Panc1 (cell line): ENCODE measurements at regions of chr1 and their contacts with region 1.

Region 1: DNA sequence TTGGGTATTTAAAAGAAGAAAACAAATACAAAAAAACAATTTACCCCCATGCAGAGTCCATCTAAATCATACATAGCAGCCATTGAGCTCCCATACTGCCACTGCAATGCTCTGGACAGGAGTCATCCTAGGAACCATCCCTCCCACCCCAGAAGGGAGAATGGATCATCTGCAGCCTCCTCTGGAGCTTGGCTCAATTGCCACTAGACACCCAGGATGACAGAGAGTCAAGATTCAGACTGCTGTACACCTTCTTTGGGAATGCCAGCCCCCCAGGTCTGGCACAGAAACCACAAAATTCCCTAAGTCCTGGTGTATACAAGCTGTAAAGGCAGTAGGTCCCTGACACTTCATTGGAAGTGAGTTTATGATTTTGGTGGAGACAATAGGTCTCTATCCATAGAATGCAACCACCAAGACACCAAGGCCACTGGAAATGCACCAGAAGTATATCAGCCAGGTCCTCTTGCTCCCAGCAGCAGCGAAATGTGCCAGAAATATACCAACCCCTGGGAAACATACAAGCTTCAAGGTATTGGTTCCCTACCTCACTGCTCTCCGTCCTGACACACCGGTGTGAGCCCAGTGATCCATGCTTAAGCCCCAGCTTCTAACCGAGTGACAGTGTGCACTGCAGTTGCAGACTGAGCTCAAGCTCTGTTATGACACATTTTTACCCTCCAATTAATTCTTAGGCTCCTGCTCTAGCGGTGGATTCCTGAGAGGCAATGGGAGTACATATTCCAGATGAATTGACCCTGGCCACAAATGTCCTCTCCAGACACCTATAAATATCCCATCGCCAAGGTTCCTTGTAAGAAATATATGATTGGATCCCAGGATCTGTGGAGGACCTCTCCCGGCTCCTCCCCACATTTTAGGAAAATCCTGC is 4.4 kb downstream of the TAL1 start:
- DNase-seq: no peak
- ATAC-seq: no peak
- H3K4me3 ChIP-seq: no peak overlapping the region
- H3K27ac ChIP-seq: no peak overlapping the region
- H3K4me1 ChIP-seq: 0 out of 2 replicates have a peak, but pooled peaks cover 2% of the 10 kb centered on the region
- H3K27me3 ChIP-seq: peaks cover 25% of the 10 kb centered on the region
- CTCF ChIP-seq: no peak

Region 2: DNA sequence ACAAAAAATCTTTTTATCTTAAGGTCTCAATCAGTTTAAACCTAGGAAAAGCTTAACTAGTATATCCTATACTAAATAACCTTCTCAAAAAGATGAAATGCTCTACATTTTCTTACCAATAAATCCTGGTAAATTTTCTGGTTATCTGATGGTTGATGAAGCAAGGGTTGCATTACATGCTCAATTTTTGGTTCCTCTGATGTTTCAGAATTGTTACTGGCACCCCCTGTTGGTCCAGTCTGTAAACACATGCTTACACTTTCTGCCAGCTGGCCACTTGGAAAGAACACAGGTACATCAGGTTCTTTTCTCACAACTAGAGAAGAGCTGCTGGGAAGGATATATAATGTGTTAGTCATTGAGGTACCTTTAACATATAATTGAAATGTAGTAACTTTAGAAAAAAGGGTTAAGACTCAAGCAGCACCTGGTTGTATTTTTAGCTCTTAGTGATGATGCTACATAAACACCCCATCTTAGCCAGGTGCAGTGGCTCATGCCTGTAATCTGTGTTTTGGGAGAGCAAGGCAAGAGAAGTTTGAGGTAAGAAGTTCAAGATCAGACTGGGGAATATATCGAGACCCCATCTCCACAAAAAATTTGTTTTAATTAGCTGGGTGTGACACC is 35.3 kb after region 1 on chr1:
- CTCF ChIA-PET with region 1: no interaction called
- POLR2A ChIA-PET with region 1: interaction called, 10 read pairs
- in situ Hi-C with region 1: no loop called
- intact Hi-C with region 1: no loop called
- DNase-seq: peak; percentile 33
- ATAC-seq: peak; percentile 79
- H3K4me3 ChIP-seq: no peak overlapping the region
- H3K27ac ChIP-seq: no peak overlapping the region
- H3K4me1 ChIP-seq: no peaks in the 10 kb centered on the region
- H3K27me3 ChIP-seq: no peaks in the 10 kb centered on the region
- CTCF ChIP-seq: peak; percentile 77

Region 3: DNA sequence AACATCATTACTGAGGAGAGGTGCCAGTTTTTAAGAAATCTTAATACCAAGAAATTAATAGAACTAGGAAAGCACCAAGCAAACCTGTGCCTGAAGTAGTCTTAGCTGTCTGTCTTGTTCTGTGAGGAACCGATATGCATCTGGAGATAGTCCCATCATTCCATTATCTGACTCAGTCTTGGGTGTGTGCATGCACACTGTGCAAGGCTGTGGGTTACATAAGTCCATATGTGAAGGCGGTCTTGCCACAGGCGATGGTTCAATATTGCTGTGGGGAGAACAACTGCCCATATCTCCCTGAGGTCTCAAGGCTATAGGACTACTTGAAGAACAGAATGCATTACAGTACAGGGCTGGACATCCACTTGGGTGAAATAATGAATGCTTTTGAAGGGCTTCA is 52.6 kb after region 1 on chr1:
- CTCF ChIA-PET with region 1: no interaction called
- POLR2A ChIA-PET with region 1: no interaction called
- in situ Hi-C with region 1: no loop called
- intact Hi-C with region 1: no loop called
- DNase-seq: no peak
- ATAC-seq: no peak
- H3K4me3 ChIP-seq: no peak overlapping the region
- H3K27ac ChIP-seq: no peak overlapping the region
- H3K4me1 ChIP-seq: no peaks in the 10 kb centered on the region
- H3K27me3 ChIP-seq: no peaks in the 10 kb centered on the region
- CTCF ChIP-seq: no peak